Posterior vena cava (tissue), 2 donors: ENCODE measurements at regions of chr17 and their contacts with region 1.

Region 1: DNA sequence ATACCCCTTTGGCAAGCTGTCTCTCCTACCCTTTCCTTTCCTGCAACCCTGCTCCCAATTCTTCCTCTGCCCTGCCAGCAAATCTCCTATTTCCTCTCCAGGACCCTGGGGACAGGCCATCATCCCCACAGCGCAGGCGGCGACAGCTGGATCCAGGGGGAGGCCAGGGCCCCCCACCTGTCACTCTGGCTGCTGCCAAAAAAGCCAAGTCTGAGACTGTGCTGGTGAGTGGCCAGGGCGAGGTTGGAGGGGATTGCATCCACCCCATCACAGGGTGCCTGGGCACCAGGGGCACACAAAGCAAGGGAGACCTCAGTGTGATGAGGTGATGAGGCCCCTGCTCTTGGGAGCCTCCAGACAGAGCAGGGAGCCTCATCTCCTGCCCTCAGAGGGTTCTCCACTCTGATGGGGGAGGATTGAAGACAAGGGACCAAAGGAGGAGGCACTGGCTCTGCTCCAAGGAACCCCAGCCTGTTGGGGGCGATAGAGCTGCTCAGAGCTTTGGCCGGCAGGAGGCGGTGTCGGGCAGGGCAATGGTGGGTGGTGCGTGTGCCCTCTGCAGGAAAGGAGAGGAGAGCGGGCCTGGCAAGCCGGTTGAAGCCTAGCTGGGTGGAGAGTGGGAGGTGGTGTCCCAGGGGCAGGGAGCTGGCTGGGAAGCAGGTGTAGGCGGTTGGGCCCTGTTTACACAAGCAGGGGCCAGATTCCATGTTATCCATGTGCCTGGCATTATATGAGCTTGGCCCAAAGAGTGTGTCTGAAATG is 15.6 kb upstream of the PDK2 start:
- DNase-seq: peak; percentile 76

Region 2: DNA sequence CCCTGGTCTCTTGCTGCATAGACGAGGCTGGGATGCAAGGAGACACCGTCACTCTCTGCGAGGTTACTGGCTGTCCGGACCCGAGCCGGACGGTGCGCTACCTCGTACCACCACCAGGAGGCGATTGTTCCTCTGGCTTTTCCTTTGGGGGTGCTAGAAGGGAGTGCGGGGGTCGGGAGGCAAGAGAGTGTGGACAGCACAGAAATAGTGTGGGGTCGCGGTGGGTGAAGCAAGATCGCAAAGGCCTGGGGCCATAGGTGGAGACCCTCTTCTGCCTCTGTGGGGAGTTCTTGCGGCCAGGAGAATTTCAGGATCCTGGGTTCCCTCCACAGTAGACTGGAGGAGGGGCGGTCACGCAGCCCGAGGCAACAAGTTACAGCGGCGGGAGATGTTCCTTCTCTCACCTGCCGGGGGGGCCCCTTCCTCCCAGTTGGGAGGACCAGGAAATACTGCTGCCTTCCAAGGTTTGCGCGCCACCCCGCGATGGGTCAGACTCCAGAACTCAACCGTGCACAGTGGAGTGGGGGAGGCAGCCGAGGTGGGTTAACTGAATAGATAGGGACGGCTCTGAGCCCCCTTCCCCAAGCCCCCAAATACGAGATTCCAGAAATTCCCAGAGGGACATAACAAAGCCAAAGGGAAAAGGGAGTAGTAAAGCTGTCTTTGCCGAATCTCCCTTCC is 855.9 kb before region 1 on chr17:
- intact Hi-C with region 1: no loop called
- DNase-seq: peak; percentile 87

Region 3: DNA sequence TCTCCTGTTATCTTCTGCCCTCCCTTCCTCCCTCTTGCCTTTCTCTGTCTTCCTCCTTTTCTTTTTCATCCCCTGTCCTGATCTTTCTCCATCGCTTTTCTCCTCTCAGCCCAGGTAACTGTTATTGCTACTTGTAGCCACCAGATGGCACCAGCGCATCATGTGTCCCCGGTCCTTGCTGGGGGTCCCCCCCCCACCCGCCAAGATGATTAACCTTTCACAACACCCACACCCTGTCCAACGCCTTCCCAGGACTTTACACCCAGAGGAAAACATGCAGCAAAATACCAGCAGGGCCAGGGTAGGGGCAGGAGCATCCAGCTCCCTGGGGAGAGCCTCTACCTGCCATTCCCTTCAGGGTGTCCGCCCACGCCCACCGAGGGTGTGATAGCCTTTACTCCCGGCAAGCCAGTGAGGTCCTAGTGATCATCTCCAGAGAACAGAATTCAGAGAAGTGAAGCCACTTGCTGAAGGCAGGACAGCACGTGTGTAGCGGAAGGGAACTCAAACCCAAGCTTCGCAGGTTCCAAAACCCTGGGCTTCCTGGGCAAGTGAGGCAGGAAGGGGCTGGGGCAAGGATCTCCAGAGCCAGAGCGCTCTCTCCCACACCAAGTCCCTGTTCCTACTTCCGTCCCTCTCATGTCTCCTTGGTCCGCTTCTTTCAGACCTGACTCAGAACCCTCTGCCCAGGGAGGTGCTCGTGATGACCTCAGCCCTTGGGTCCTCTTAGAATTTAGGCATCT is 218.2 kb before region 1 on chr17:
- intact Hi-C with region 1: loop called in 1 of 2 experiments (anchors 10 kb)
- DNase-seq: peak; percentile 64

Region 4: DNA sequence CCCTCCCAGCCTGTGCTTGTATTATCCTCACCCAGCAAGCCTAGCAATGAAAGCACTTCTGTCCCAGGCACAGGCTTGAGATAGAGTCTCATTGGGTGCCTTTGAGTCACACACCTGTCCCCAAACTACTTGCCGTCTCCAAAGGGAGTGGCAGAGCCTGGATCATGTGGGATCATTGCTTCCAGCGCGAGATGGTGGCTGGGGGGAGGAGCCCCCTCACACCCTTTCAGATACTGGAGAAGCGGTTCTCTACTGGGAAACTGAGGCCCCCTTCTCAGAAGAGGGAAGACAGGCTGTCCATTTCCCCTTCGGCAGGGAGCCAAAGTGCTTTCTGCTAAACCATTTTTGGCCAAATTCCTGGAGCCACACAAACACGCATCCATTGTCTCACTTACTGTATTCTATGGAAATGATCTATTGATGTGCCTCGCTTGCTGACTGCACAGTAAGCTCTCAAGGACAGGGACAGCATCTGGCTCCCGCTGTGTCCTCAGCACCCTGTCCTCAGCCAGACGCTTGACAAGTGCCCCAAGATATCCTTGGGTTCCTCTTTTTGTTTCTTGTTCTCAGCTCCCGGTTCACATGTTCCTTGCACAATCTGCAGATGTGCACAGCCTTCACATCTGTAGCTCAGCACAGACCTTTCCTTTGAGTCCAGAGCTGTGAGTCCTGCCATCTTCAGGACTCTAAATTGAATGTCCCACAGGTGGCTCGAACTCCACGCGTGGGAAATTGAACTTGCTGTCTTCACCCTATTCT is 58.5 kb before region 1 on chr17:
- intact Hi-C with region 1: no loop called
- DNase-seq: peak; percentile 7

Region 5: DNA sequence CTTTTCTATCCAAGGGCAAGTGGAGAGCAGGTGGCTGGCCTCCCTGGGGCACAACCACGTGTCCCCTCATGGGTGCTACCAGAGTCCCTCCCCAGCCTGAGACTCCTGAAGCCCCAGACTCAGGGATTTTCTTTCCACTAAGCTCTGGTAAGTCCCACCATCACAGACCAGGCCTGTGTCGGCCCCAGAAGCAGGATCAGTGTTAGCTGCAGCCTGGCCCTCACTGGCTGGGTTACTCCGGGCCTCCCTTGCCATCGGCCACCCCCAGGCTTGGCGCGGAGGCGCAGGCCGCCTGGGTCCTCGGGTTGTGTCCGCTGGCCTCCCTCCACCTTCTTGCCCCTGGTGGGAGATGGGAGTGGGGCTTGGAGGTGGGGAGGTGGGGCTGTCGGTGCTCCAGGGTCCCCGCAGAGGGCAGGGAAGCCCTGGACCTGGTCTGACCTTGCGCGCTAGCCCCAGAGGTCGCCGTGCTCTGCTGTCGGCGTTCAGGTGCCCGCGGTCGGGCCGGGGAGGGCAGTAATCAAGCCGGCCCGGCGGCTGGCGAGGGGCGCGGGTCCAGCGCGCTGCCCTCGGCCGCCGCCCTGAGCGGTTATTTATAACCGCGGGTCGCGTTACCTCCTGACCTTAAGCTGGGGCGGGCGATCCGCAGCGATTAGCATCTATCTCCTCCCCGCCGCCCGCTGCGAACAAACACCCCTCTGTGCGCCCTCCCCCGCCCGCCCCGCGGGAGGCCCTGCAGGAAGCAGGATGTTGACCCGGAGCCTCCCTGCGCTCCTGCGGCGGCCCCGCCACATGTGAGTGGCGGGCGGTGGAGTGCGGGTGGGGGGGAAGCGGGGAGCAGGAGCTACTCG is 864.8 kb after region 1 on chr17:
- intact Hi-C with region 1: no loop called
- DNase-seq: peak; percentile 92